Activated naive CD4-positive, alpha-beta T cell treated with anti-CD3 and anti-CD28 coated beads for 36 hours (primary cell): ENCODE measurements at regions of chr12 and their contacts with region 1.

Region 1: DNA sequence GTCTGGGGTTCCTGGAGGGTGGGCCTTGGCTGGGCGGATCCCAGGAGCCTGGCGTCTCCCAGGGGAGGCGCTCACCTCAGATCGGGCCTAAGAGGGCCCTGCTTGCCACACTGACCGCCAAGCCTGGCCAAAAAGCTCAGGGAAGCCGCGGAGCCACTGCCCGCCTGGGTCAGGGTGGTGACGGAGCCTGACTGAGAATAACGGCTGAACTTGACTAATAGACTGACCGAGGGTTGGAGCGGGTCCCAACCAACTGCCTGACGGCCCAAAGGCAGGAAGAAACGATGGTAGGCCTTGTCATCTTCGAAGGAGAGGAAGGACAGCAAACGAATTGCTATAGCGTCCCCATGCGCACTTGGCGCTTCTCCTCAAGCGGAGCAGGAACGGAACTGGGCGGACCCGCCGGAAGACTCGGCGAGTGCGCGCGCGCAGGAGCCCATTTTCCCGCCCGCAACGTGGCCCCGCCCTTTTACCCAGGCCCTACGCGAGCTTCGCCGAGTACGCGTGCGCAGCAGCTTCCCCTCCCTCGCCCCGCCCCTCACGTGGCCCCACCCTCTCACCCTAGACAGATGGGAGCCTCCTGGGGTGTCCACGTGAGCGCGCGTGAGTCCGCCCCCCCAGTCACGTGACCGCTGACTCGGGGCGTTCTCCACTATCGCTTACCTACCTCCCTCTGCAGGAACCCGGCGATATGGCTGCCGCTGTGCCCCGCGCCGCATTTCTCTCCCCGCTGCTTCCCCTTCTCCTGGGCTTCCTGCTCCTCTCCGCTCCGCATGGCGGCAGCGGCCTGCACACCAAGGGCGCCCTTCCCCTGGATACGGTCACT is at the starts of genes ERP29 and TMEM116:
- DNase-seq: peak; percentile 100
- H3K4me3 Mint-ChIP-seq: peak within 1 kb of the TSS; percentile 98
- H3K27ac Mint-ChIP-seq: peak within 1 kb of the TSS; percentile 96
- H3K4me1 Mint-ChIP-seq: peaks cover 48% of the 10 kb centered on the region
- H3K27me3 Mint-ChIP-seq: no peaks in the 10 kb centered on the region
- total RNA-seq, gene ERP29: 101 to 107 TPM
- total RNA-seq, gene TMEM116: 12.7 to 13.4 TPM

Region 2: GRCh38 chr12:111599459-111600204 is 413.4 kb before region 1 on chr12:
- CTCF ChIA-PET with region 1: no interaction called
- intact Hi-C with region 1: loop called (anchors 10 kb)
- DNase-seq: peak; percentile 83
- H3K4me3 Mint-ChIP-seq: peak overlapping the region; percentile 83
- H3K27ac Mint-ChIP-seq: peak overlapping the region; percentile 85
- H3K4me1 Mint-ChIP-seq: peaks cover 25% of the 10 kb centered on the region
- H3K27me3 Mint-ChIP-seq: no peaks in the 10 kb centered on the region

Region 3: GRCh38 chr12:111942557-111942956 is 70.4 kb before region 1 on chr12:
- CTCF ChIA-PET with region 1: interaction called, 36 read pairs
- intact Hi-C with region 1: loop called (anchors 1 kb)
- DNase-seq: no peak
- H3K4me3 Mint-ChIP-seq: no peak overlapping the region
- H3K27ac Mint-ChIP-seq: no peak overlapping the region
- H3K4me1 Mint-ChIP-seq: peaks cover 12% of the 10 kb centered on the region
- H3K27me3 Mint-ChIP-seq: no peaks in the 10 kb centered on the region

Region 4: GRCh38 chr12:112096667-112097066 is 83.7 kb after region 1 on chr12:
- CTCF ChIA-PET with region 1: no interaction called
- intact Hi-C with region 1: loop called (anchors 1 kb)
- DNase-seq: peak; percentile 59
- H3K4me3 Mint-ChIP-seq: peak overlapping the region; percentile 1
- H3K27ac Mint-ChIP-seq: peak overlapping the region; percentile 92
- H3K4me1 Mint-ChIP-seq: peaks cover 50% of the 10 kb centered on the region
- H3K27me3 Mint-ChIP-seq: no peaks in the 10 kb centered on the region

Region 5: DNA sequence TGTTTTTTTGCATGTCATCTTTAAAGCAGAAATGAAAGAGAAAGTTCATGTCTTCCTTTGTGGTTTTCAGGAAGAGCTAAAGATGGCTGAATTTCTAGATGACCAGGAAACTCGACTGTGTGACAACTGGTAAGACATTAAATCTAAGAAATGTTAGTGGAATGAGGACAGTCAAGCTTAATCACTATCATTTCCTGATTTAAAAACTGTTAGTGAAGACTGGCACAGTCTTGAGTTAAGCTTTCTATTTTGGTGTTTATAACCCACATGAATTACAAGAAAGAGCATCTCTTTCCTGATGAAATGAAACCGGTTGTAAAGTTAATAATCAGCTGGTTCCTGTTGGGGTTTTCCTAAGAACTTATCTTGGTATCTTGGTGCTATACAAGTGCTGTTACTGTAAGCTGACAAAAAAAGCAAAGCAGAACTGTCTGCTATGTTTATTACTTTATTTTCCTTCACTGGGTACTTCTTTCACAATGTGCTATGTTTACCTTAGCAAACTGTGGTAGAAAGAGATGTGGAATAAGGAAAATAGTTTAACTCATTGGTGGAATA is 117.5 kb after region 1 on chr12:
- CTCF ChIA-PET with region 1: no interaction called
- intact Hi-C with region 1: loop called (anchors 1 kb)
- DNase-seq: no peak
- H3K4me3 Mint-ChIP-seq: peak overlapping the region; percentile 42
- H3K27ac Mint-ChIP-seq: peak overlapping the region; percentile 88
- H3K4me1 Mint-ChIP-seq: peaks cover 54% of the 10 kb centered on the region
- H3K27me3 Mint-ChIP-seq: no peaks in the 10 kb centered on the region

Region 6: DNA sequence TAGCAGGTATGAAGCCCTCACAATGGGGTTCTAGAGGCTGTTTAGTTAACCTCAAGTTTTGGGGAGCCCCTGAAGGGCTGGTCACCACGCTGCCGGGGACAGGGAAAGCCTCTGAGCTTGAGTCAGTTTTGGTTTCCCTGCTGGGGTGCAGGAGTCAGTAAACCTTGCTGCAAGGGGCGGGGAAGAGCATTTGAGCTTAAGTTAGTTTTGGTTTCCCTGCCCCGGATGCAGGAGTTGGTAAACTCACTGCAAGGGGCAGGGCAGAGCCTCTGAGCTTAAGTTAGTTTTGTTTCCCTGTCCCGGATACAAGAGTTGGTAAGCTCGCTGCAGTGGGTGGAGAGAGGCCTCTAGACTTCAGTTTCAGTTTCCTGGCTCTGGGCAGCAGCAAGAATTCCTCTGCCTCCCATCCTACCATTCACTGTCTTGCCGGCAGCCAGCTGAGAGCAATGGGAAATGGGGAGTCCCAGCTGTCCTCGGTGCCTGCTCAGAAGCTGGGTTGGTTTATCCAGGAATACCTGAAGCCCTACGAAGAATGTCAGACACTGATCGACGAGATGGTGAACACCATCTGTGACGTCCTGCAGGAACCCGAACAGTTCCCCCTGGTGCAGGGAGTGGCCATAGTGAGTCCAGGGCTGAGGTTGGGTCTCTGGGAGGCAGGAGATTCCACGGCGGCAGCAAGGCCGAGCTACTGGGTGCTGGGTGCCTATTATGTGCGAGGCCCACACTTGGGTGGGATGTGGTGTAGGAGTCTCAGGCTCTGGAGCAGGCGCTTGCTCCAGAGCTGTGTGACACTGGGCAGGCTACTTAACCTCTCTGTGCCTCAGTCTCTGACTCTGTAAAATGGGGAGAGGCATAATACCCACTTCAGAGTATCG is 965.4 kb after region 1 on chr12 and contains the start of gene OAS2:
- CTCF ChIA-PET with region 1: no interaction called
- intact Hi-C with region 1: loop called (anchors 2 kb)
- DNase-seq: peak; percentile 93
- H3K4me3 Mint-ChIP-seq: peak within 1 kb of the TSS; percentile 81
- H3K27ac Mint-ChIP-seq: peak within 1 kb of the TSS; percentile 100
- H3K4me1 Mint-ChIP-seq: peaks cover 36% of the 10 kb centered on the region
- H3K27me3 Mint-ChIP-seq: no peaks in the 10 kb centered on the region
- total RNA-seq, gene OAS2: 191 to 196 TPM